ENCODE measurements at regions of chr10 and their contacts with region 1.

Region 1: DNA sequence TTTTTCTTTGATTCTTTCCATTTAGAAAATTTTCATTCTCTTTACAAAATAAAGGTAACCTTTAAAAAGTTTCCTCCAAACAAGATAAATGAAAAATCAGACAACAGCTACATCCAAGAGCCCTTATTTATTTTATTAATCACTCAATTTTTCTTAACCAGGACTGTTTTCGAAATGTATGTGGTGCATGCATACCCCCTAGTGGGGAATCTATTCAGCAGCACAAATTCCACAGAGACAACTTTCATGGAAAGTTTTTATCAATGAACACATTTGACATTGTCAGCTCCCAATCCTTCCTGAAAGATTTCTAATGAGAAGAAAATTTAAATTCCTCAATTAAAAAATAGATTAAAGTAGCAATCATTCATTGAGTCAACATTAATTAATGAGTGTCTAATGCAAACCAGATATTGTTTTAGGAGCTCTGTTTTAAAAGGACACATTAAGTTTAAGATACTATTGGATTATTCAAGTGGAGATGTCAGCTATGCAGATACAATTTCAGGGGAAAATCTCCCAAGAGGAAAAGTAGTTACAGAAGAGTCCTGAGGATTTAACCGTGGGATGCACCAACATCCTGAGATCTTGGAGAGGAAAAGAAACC is 5.2 kb upstream of the HTR7 start:
- DNase-seq: peak; percentile 36
- ATAC-seq: no peak
- H3K4me3 ChIP-seq: no peak overlapping the region
- H3K27ac ChIP-seq: no peak overlapping the region
- H3K4me1 ChIP-seq: no peaks in the 10 kb centered on the region; the same call in 1 of the 2 replicates
- H3K27me3 ChIP-seq: peaks cover 27% of the 10 kb centered on the region
- CTCF ChIP-seq: peak; percentile 82; the same call in 1 of the 2 replicates

Region 2: DNA sequence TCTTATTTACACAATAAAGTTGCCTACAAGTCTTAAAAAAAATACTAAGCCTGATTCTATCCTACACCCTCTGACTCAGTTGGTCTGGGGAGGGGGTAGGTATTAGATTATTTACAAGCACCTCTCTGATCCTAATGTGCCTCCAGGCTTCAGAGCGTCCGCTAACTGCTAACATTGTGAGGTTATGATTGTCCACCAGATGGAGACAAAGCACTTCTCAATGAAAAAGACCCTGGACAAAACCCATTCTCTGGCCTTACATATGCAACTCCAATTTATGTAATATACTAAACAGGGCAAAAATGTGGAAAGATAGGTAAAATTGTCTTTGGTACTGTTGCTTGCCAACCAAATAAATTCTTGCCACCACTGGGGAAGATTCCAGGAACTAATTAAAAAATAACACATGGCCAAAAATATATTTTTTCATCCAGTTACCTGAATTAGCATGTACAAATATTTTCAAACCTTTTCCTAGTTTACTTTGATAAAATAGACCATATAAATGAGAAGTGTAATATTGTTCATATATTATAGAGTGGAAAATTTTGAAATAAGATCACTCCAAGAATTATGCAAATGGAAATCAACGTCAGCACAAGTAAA is 1069.3 kb before region 1 on chr10:
- CTCF ChIA-PET with region 1: interaction called, 3 read pairs
- POLR2A ChIA-PET with region 1: no interaction called
- in situ Hi-C with region 1: no loop called
- intact Hi-C with region 1: loop called (anchors 5 kb)
- DNase-seq: peak; percentile 60
- ATAC-seq: peak; percentile 93
- H3K4me3 ChIP-seq: no peak overlapping the region
- H3K27ac ChIP-seq: no peak overlapping the region
- H3K4me1 ChIP-seq: no peaks in the 10 kb centered on the region
- H3K27me3 ChIP-seq: no peaks in the 10 kb centered on the region
- CTCF ChIP-seq: peak; percentile 87

Region 3: DNA sequence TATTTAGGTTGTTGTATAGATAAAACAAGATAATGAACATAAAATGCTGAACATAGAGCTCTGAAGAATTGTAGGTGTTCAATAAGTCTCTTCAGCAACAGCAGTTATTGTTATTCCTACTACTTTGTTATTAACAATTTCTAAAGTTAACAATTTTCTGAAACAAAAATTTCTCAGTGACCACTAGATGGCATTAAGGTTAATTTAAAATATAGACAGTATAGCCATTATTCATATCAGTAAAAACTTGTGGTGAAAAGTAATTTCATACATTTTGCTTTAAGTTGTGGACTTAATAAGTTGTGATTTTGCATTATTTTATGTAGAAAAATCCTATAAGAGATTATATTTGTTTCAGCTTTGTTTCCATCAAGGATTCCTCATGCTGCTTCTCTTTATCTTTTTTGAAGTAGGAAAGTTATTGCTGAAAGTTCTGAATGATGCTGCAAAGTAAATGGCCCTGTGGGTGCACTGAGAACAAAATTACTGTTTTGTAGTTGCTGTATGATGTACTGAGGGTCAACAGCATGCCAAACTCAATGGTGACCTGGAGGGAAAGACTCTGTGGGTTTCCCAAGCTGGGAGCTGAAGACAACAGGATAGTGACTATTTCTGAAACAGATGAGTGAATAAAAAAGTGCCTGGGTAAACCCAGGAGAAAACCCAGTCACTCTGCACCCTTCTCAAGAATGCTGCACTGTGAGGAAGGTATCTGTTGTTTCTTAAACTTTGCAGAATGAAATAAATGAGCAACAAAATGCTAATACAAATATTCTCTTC is 908.0 kb before region 1 on chr10:
- CTCF ChIA-PET with region 1: no interaction called
- POLR2A ChIA-PET with region 1: no interaction called
- in situ Hi-C with region 1: no loop called
- intact Hi-C with region 1: loop called (anchors 5 kb)
- DNase-seq: no peak
- ATAC-seq: no peak
- H3K4me3 ChIP-seq: no peak overlapping the region
- H3K27ac ChIP-seq: no peak overlapping the region
- H3K4me1 ChIP-seq: no peaks in the 10 kb centered on the region
- H3K27me3 ChIP-seq: 0 out of 2 replicates have a peak, but pooled peaks cover 2% of the 10 kb centered on the region
- CTCF ChIP-seq: peak; percentile 47; the same call in 1 of the 2 replicates

Region 4: GRCh38 chr10:90751107-90751997 is 111.7 kb before region 1 on chr10:
- CTCF ChIA-PET with region 1: interaction called, 3 read pairs
- POLR2A ChIA-PET with region 1: no interaction called
- in situ Hi-C with region 1: no loop called
- intact Hi-C with region 1: loop called (anchors 1 kb)
- DNase-seq: peak; percentile 38
- ATAC-seq: peak; percentile 95
- H3K4me3 ChIP-seq: no peak overlapping the region
- H3K27ac ChIP-seq: no peak overlapping the region
- H3K4me1 ChIP-seq: no peaks in the 10 kb centered on the region
- H3K27me3 ChIP-seq: peaks cover 2% of the 10 kb centered on the region
- CTCF ChIP-seq: peak; percentile 85

Region 5: DNA sequence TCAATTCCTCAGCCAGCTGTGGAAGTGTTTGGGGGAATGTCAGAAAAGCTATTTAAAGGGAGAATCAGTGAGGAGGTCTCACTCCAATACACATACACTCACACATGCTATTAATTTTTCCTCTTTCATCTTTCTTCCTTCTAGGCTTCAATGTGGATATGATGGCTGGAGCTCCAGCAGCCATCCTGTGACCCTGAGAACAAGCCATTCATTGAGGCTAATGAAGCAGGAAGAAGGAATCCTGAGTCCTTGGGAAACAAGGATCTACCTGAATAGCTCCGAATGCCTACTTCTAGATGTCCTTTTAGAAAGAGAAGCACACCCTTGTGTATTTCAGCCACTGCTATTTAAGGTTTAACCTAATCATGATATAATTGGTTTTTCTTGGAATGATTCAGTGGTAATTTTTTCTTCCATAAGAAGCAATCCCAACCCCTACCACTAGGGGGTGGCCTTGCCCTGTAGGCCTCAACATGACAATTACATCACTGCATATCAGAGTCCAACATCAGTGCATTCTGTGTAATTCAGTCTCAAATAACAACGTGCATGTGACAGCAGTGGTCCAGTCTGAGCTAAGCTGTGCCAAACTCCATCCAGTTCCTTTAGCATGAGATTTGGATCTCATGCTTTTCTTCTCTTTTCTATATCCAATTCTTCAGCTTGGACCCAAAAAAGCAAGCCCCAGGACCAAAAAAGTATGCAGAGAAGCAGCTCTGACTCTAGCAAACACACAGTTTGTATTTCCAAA is 143.2 kb after region 1 on chr10:
- CTCF ChIA-PET with region 1: no interaction called
- POLR2A ChIA-PET with region 1: no interaction called
- in situ Hi-C with region 1: no loop called
- intact Hi-C with region 1: no loop called
- DNase-seq: peak; percentile 41
- ATAC-seq: no peak
- H3K4me3 ChIP-seq: no peak overlapping the region
- H3K27ac ChIP-seq: no peak overlapping the region
- H3K4me1 ChIP-seq: no peaks in the 10 kb centered on the region
- H3K27me3 ChIP-seq: no peaks in the 10 kb centered on the region
- CTCF ChIP-seq: peak; percentile 94

Region 6: DNA sequence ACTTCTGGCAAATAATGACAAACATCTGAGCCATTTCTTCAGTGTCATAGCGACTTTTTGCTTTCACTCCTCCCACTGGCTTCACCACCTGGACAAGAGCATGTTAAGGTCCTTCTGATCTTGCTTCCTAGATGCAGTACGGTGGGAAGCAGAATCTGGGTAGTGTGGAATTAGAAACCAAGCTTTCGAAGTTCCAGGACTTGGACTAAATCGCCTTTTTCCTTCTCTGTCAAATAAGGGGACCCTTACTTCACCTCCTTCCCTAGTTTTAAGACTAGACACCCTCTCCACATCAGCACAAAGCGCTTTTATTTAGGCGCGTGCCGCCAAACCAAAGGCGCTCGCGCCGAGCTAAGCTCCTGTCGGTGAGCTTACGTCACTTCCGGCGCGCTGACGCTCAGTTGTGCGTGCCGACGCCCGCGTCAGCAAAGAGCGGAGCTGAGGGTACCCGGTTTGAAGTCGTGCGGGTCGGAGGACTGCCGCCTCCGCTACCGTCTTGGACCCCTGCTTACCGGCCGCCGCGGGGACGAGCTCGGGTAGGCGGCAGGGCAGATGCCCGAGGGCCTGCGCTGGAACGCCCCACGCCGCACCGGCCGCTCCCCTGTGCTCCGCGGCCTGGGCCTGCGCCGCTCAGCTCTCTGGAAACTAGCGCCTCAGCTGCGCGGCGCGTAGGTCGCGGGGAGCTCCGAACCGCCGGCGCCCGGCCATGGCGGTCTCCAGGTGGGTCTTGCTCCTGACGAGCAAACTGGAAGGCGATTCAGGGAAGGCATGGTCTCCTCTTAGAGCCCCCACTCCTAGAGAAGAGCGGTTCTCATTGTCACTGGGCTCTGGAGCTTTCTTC is 1060.6 kb after region 1 on chr10 and contains the start of gene BTAF1:
- CTCF ChIA-PET with region 1: no interaction called
- POLR2A ChIA-PET with region 1: no interaction called
- in situ Hi-C with region 1: no loop called
- intact Hi-C with region 1: no loop called
- DNase-seq: peak; percentile 83
- ATAC-seq: peak; percentile 100
- H3K4me3 ChIP-seq: peak within 1 kb of the TSS; percentile 86 to 98
- H3K27ac ChIP-seq: peak within 1 kb of the TSS; percentile 97
- H3K4me1 ChIP-seq: peaks cover 4% of the 10 kb centered on the region; the same call in 1 of the 2 replicates
- H3K27me3 ChIP-seq: no peaks in the 10 kb centered on the region
- CTCF ChIP-seq: no peak
- total RNA-seq, gene BTAF1: 33.8 TPM

Measured in Panc1 (cell line).